ENCODE measurements at regions of chr18 and their contacts with region 1.

Region 1: DNA sequence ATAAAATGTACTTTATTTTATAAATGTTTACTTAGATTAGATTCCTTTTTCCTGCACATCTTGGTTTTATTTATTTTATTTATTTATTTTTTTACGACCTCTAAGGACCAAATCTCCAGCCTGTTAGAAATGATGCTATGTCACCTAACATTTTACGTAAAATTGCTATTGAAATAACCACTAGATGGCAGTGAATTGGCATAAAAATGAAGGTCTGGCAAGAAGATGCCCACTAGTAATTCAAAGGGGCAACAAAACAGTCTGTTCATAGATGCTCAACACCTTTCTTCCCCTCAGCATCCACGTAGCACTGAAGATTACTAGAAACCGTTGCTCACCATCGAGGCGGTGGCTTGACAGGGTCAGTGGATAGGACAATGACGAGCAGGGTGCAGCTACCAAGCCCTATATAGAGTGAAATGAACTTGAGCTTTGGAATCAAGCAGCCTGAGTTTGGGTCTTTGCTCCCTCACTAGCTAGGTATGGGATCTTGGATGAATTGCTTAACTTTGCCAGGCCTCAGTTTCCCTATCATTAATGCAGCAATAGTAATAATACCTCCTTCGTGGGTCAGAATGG is 128.7 kb upstream of the L3MBTL4 start:
- DNase-seq: no peak
- H3K4me3 ChIP-seq: no peak overlapping the region
- H3K27ac ChIP-seq: no peak overlapping the region
- H3K27me3 ChIP-seq: no peaks in the 10 kb centered on the region
- CTCF ChIP-seq: peak; percentile 49

Region 2: GRCh38 chr18:5998907-5999306 is 544.5 kb before region 1 on chr18:
- in situ Hi-C with region 1: no loop called
- DNase-seq: no peak
- H3K4me3 ChIP-seq: no peak overlapping the region
- H3K27ac ChIP-seq: no peak overlapping the region
- H3K27me3 ChIP-seq: no peaks in the 10 kb centered on the region
- CTCF ChIP-seq: no peak

Region 3: DNA sequence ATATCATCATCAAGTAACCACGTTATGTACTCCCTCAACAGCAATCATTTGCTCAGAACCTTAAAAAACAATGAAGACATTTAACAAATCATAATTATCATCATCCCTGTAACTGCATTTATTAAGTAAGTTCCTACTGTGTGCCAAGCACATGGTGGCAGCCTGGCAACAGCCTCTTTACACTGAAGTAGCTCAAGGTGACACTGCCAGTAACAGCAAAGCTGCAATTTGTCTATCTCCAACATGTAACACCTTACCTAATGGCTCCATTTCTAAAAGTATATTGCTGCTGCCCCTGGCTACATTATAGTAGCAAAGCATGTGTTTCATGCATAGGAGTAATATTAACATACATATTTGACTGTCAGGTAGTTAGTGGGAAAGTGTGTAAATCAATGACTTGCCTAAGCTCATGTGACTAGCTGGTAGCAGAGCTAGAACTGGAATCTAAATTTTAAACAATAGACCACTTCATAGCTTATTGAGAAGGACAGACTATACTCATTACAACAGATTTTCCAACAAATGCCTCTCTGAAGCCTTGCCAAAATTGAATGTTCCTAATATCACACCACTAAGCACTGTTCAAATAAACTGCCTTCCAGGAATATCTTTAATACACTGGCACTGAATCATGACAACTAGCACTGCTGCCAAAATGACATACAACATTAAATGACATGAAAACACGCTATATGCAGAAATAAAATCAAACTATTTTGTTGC is 215.4 kb before region 1 on chr18:
- in situ Hi-C with region 1: no loop called
- DNase-seq: no peak
- H3K4me3 ChIP-seq: no peak overlapping the region
- H3K27ac ChIP-seq: no peak overlapping the region
- H3K27me3 ChIP-seq: no peaks in the 10 kb centered on the region
- CTCF ChIP-seq: no peak

Region 4: GRCh38 chr18:6648581-6648980 is 105.2 kb after region 1 on chr18:
- in situ Hi-C with region 1: no loop called
- DNase-seq: no peak
- H3K4me3 ChIP-seq: no peak overlapping the region
- H3K27ac ChIP-seq: no peak overlapping the region
- H3K27me3 ChIP-seq: no peaks in the 10 kb centered on the region
- CTCF ChIP-seq: no peak

Region 5: GRCh38 chr18:6885992-6886796 is 342.8 kb after region 1 on chr18:
- in situ Hi-C with region 1: loop called (anchors 10 kb)
- DNase-seq: peak; percentile 45
- H3K4me3 ChIP-seq: no peak overlapping the region
- H3K27ac ChIP-seq: no peak overlapping the region
- H3K27me3 ChIP-seq: no peaks in the 10 kb centered on the region
- CTCF ChIP-seq: peak; percentile 72